ENCODE measurements at regions of chr19 and their contacts with region 1.

Region 1: DNA sequence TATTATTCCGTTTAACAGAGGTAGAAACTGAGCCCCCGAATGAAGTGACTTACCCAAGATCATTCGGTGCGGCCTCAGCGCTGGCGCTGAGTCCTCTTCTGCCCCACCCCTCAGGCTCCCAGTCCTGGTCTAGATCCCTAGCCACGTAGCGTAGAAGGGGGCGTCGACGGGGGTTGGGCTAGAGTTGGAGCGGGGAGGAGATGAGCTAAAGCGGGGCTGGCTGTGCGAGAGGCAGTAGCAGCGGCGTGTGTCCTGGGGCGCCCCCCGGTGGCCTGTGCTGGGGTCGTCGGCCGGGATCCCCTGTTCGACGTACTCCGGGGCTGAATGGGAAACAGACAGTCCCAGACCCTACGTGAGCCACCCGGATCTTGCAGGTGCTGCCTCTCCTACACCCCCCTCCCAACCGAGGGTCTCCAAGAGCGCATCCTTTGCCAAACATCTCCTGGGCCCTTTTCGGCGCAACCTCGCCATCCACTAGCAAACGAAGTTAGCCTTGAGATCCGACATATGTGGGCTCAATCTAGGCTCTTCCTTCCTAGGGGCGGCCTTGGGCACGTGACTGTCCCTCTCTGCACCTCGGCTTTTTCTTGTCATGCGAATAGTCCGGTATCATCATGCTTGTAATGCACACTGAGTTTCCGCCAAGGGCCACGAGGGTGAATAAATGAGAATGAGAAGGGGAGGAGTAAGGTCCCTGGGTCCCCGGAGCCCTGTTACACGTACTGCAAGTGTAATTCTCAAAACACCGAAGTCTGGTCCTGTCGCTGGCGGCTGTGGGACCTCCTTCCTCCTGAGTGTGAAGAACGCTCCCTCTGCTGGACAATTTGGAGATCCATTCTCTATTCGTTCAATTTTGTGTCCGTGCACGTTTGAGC is 47.7 kb downstream of the CYP4F22 start:
- DNase-seq: peak; percentile 74 to 86 (median 81)
- H3K4me3 ChIP-seq: peak overlapping the region; percentile 7
- H3K27ac ChIP-seq: no peak overlapping the region
- H3K4me1 ChIP-seq: peaks cover 4% of the 10 kb centered on the region
- H3K27me3 ChIP-seq: no peaks in the 10 kb centered on the region
- CTCF ChIP-seq: peak; percentile 62 to 82 (median 81)
- EP300 ChIP-seq: no peak
- POLR2A ChIP-seq: no peak

Region 2: GRCh38 chr19:15091901-15092753 is 463.9 kb before region 1 on chr19:
- intact Hi-C with region 1: loop called (anchors 5 kb)
- DNase-seq: peak in 2 of 5 donors; percentile 45 to 51
- H3K4me3 ChIP-seq: no peak overlapping the region
- H3K27ac ChIP-seq: no peak overlapping the region
- H3K4me1 ChIP-seq: no peaks in the 10 kb centered on the region
- H3K27me3 ChIP-seq: no peaks in the 10 kb centered on the region
- CTCF ChIP-seq: peak; percentile 23 to 70 (median 42)
- EP300 ChIP-seq: no peak
- POLR2A ChIP-seq: no peak

Region 3: GRCh38 chr19:15177269-15178116 is 378.5 kb before region 1 on chr19:
- intact Hi-C with region 1: loop called in 3 of 4 experiments (anchors 1 to 2 kb)
- DNase-seq: peak; percentile 58 to 87 (median 79)
- H3K4me3 ChIP-seq: no peak overlapping the region
- H3K27ac ChIP-seq: no peak overlapping the region
- H3K4me1 ChIP-seq: no peaks in the 10 kb centered on the region
- H3K27me3 ChIP-seq: no peaks in the 10 kb centered on the region
- CTCF ChIP-seq: peak; percentile 80 to 96 (median 96)
- EP300 ChIP-seq: no peak
- POLR2A ChIP-seq: no peak

Region 4: DNA sequence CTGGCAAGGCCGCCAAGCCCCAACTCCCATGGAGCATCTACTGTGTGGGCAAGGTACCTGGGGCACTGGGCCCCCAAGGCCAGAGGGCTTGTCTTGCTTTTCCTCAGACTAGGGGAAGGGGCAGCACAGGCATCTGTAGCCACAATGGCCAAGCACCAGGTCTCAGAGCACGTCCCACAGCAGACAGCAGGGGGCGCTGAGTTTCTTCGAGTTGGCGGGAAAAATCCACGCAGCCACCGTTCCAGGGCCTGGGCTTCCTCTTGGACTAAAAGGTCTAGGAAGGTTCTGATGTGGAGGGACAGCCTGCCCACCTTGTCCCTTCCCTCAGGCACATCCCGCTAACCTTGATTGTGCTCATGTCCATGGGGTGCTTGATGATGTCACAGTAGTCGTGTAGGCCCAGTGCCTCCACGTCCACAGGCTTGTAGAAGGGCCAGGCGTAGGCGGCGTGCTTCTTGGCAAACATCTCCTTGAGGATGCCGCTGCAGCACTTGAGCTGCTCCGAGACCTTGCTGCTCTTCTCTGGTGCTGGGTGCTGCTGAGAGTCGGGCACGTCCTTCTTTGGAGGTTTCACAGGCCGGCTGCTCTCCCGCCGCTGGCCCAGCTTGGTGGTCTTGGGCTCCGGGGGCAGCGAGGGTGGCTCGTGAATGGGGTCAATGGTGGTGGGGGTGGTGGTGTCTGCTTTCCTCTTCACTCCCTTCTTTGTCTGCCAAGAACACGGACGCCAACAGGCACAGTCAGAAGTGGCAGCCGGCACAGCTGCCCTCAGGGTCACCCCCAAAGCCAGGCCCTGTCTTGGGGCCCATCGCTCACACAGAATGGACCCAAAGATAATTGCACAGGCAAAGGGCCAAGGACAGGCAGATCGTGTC is 291.7 kb before region 1 on chr19:
- intact Hi-C with region 1: loop called in 2 of 4 experiments (anchors 5 to 10 kb)
- DNase-seq: peak; percentile 62 to 86 (median 81)
- H3K4me3 ChIP-seq: no peak overlapping the region
- H3K27ac ChIP-seq: peak overlapping the region; percentile 30 to 66
- H3K4me1 ChIP-seq: peaks cover 21% of the 10 kb centered on the region
- H3K27me3 ChIP-seq: no peaks in the 10 kb centered on the region
- CTCF ChIP-seq: peak; percentile 12 to 63 (median 56)
- EP300 ChIP-seq: no peak
- POLR2A ChIP-seq: no peak

Region 5: GRCh38 chr19:15379083-15379995 is 176.7 kb before region 1 on chr19 and contains the start of gene AKAP8:
- intact Hi-C with region 1: loop called in 1 of 4 experiments (anchors 10 kb)
- DNase-seq: peak; percentile 98 to 99 (median 98)
- H3K4me3 ChIP-seq: peak within 1 kb of the TSS; percentile 97
- H3K27ac ChIP-seq: peak within 1 kb of the TSS; percentile 82 to 97
- H3K4me1 ChIP-seq: peaks cover 20% of the 10 kb centered on the region
- H3K27me3 ChIP-seq: no peaks in the 10 kb centered on the region
- CTCF ChIP-seq: no peak
- EP300 ChIP-seq: no peak
- POLR2A ChIP-seq: peak; percentile 91
- total RNA-seq, gene AKAP8: 19.1 to 53.3 (median 46.4) TPM

Region 6: DNA sequence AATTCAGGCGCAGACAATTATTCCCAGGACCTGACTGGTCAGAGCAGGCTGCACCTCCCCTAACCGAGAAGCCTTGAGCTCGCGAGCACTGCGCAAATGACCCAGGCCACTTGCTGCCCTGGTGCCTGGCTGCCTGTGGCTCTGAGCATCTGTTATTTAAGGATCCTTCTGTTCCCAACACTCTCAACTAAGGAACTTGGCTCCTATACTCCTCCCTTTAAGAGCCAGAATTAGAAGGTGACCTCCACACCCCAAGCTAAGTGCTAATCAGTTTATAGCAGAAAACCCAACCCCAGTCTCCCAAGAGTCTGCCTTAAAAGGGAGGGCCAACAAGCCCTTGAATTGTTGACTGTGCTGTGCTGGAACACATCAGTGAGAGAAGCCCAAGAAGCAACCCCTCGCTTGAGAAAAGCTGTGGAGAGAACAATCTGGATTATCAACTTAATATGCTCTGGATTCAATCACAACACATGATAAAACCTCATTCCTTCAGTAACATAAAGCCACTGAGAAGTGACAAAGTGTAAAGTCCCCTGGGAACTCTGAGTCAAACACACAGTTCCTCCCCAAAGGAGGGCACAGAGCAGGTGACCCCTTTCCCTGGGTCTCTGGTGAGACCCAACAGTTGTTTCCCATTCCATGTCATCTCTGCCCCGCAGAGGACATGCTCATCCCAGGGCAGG is 151.8 kb before region 1 on chr19:
- intact Hi-C with region 1: no loop called
- DNase-seq: no peak
- H3K4me3 ChIP-seq: no peak overlapping the region
- H3K27ac ChIP-seq: no peak overlapping the region
- H3K4me1 ChIP-seq: peaks cover 20% of the 10 kb centered on the region
- H3K27me3 ChIP-seq: no peaks in the 10 kb centered on the region
- CTCF ChIP-seq: no peak
- EP300 ChIP-seq: no peak
- POLR2A ChIP-seq: no peak

Region 7: GRCh38 chr19:15488489-15489224 is 67.3 kb before region 1 on chr19:
- intact Hi-C with region 1: no loop called
- DNase-seq: no peak
- H3K4me3 ChIP-seq: no peak overlapping the region
- H3K27ac ChIP-seq: no peak overlapping the region
- H3K4me1 ChIP-seq: no peaks in the 10 kb centered on the region
- H3K27me3 ChIP-seq: no peaks in the 10 kb centered on the region
- CTCF ChIP-seq: no peak
- EP300 ChIP-seq: no peak
- POLR2A ChIP-seq: no peak

Region 8: GRCh38 chr19:15516363-15516762 is 39.6 kb before region 1 on chr19:
- intact Hi-C with region 1: no loop called
- DNase-seq: no peak
- H3K4me3 ChIP-seq: no peak overlapping the region
- H3K27ac ChIP-seq: no peak overlapping the region
- H3K4me1 ChIP-seq: no peaks in the 10 kb centered on the region
- H3K27me3 ChIP-seq: no peaks in the 10 kb centered on the region
- CTCF ChIP-seq: no peak
- EP300 ChIP-seq: no peak
- POLR2A ChIP-seq: no peak